Activated CD4-positive, alpha-beta memory T cell treated with anti-CD3 and anti-CD28 coated beads, Interleukin-2, amount 10 ng/mL, durations not matched to agents 7 days and 5 days (primary cell): ENCODE measurements at regions of chr13 and their contacts with region 1.

Region 1: DNA sequence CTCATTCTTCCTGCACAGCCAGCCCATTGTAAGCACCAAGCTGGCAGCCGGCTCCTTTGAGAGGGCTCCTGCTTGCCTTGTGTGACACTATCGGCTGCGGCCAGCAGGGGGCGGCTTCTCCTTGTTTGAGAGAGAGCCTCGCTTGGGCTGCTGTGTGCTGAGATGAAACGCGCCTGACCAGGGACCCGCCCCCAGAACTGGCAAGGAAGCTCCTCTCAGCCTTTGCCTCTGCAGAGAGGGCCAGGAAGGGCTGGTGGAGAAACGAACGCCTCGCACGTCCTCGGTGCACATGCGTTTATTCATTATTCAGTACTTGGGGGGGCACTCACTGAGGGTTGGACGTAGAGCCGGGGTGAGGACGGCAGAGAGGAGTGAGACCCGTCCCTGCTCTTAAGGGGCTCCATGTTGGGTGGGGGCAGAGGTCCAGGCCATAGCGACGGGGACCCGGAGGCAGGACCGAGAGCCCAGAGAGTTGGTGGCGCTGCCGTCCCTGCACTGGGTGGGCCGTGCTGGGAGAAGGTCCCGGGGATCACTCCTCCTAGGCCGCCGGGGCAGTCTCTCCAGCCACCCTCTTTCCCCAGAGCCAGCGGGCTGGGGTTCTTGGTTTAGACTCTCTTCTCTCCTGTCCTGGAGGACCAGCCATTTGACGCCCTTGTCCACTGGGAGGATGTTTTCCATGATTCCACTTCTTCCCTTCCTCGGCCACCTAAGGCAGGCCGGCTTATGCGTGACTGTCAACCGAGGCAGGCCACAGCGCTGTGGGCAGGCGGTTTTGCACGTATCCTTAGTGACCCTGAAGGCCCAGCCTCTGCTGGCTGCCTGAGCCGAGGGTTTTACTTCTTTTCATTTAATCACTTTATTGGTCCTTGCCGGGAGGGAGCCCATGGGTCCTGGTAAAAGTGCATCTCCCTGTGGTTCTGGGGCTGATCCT is 174.5 kb downstream of the KATNAL1 start:
- DNase-seq: peak; percentile 98
- H3K4me3 Mint-ChIP-seq: no peak overlapping the region
- H3K27ac Mint-ChIP-seq: peak overlapping the region; percentile 21
- H3K4me1 Mint-ChIP-seq: peaks cover 11% of the 10 kb centered on the region
- H3K27me3 Mint-ChIP-seq: no peaks in the 10 kb centered on the region

Region 2: GRCh38 chr13:29522044-29522685 is 610.7 kb before region 1 on chr13:
- CTCF ChIA-PET with region 1: no interaction called
- POLR2A ChIA-PET with region 1: no interaction called
- DNase-seq: no peak
- H3K4me3 Mint-ChIP-seq: no peak overlapping the region
- H3K27ac Mint-ChIP-seq: no peak overlapping the region
- H3K4me1 Mint-ChIP-seq: no peaks in the 10 kb centered on the region
- H3K27me3 Mint-ChIP-seq: no peaks in the 10 kb centered on the region

Region 3: DNA sequence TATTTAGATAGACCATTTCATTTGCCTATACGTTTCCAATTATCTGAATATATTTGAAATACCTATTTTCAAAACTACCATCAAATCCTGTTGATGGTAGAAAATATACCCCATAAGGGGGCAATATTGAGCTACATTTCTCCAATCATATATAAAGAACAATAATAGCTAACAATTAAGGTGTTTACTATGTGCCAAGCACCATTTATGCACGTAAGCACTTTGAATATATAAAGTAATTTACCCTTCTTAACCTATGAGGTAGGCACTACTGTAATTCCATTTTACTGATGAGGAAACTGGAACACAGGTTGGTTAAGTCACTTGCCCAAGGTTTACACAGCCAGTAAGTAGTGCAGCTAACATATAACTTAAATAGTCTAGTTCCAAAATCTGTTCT is 361.6 kb before region 1 on chr13:
- CTCF ChIA-PET with region 1: interaction called, 21 read pairs
- POLR2A ChIA-PET with region 1: no interaction called
- DNase-seq: no peak
- H3K4me3 Mint-ChIP-seq: no peak overlapping the region
- H3K27ac Mint-ChIP-seq: no peak overlapping the region
- H3K4me1 Mint-ChIP-seq: no peaks in the 10 kb centered on the region
- H3K27me3 Mint-ChIP-seq: no peaks in the 10 kb centered on the region

Region 4: DNA sequence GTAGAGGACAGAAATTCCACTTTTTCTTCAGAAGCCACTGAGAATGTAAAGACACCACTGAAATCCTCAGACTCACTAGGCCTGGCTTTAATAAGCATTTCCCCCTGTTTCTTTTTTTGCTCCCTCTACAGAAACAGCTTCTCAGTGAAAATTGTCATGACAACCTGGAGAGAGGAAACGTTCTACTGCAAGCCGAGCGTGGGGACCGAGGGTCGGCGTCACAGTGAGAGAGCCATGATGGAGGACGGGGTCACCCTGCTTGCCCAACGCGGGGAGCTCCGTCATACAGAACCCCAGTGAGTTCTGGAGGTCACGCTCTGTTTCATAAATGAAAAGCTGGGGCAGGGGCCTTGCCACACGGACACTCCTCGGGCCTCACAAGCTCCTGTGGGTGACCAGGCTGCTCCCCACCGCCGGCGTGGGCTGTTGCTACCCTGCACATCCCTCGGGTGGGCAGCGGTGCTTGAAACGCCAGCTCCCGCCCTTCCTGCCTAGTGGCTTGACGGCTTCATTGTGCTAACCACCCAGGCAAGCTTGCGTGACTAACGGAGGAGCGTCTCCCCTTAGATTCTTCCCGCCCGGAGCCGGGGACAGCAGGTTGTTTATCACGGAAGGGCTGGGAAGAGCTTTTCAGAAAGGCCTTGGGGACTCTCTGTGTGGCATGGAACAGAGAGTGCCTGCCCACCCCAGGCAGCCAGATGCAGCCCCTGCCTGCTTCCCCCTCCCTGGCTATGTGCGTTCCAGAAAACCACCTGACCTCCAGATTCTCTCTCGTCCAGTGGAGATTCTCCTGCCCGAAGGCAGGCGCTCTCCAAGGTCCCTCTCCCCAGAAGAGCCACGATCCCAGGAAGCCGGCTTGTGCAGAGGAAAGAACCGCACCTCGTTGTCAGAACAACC is 20.9 kb after region 1 on chr13:
- CTCF ChIA-PET with region 1: interaction called, 160 read pairs
- POLR2A ChIA-PET with region 1: interaction called, 42 read pairs
- DNase-seq: no peak
- H3K4me3 Mint-ChIP-seq: no peak overlapping the region
- H3K27ac Mint-ChIP-seq: no peak overlapping the region
- H3K4me1 Mint-ChIP-seq: peaks cover 80% of the 10 kb centered on the region
- H3K27me3 Mint-ChIP-seq: no peaks in the 10 kb centered on the region

Region 5: DNA sequence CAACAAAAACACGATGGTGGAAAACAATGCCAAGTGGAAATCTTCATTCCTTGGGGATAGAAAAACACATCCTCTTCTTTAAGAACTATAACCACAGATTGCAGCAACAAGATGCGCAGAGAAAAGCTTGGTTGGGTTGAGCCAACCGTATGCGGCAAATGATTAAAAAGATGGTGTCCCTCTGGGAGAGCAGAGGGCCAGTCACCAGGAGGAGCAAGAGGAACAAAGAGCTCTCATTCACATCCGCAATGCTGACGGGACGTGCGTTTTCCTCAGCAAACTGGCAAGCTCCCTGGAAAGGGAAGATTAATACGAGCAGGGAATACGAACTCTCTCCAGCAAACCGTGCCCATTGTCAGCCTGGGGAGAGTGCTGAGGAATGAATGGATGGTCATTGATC is 32.9 kb after region 1 on chr13:
- CTCF ChIA-PET with region 1: interaction called, 160 read pairs
- POLR2A ChIA-PET with region 1: interaction called, 5 read pairs
- DNase-seq: no peak
- H3K4me3 Mint-ChIP-seq: no peak overlapping the region
- H3K27ac Mint-ChIP-seq: no peak overlapping the region
- H3K4me1 Mint-ChIP-seq: peaks cover 9% of the 10 kb centered on the region
- H3K27me3 Mint-ChIP-seq: peaks cover 7% of the 10 kb centered on the region

Region 6: DNA sequence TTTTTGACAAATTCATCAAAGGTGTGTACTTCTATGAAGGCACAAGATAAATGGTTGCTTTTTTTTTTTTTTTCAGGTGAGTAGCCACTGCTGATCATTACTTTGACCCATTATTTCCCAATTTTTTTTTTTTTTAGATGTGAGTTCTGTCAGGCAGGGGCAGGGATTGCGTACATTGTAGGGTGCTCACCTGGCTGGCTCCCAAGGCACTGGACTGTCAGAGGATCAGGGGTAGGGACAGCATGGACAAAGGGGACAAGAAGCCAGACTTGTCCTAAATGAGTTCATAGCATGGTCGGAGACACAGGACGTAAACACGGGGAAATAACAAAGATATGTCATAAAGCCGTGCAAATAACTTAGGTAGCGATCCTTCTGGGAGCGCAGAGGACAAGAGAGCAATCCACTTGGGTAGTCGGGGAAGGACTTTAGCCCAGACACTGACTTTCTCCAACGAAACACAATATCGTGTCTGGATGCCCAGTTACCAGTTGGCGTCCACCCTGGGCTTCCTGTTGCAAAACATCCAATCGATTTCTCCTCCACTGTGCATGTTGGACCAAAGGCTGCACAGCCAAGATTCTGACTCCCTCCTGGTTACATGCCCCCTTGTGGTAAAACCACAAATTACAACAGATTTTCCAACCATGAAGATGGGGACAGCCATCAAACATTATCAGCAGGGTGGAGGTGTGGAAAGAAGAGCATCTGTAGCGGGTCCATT is 201.9 kb after region 1 on chr13:
- CTCF ChIA-PET with region 1: interaction called, 18 read pairs
- POLR2A ChIA-PET with region 1: no interaction called
- DNase-seq: peak; percentile 21
- H3K4me3 Mint-ChIP-seq: no peak overlapping the region
- H3K27ac Mint-ChIP-seq: no peak overlapping the region
- H3K4me1 Mint-ChIP-seq: peaks cover 17% of the 10 kb centered on the region
- H3K27me3 Mint-ChIP-seq: no peaks in the 10 kb centered on the region

Region 7: DNA sequence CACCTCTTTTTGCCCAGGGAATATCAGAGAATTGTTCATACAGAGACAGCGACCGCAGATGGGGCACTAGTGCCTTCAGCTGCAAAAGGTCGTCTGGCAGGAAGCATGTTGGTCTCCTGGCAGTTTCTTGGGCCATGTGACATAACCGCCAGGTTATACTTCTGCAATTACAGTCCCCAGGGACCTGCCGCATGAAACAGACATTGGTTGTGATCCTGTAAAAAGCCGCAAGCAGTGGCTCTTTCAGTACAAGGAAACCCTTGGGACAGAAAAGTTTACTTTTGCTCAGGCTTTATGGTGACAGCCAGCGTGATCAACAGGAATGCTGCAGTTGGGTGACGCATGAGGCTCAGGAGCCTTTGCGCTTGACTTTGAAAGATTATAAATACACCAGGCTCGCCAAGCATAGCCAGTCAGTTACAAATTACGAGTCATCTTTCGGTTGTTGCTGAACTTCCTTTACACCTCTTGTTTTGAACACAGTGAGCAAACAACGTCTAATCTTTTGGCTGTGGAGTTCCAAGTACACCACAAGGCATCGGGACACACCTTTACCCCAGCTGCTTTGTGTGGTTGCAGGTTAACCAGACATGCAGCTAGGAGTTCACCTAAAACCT is 238.9 kb after region 1 on chr13:
- CTCF ChIA-PET with region 1: interaction called, 10 read pairs
- POLR2A ChIA-PET with region 1: interaction called, 3 read pairs
- DNase-seq: peak; percentile 73
- H3K4me3 Mint-ChIP-seq: peak overlapping the region; percentile 78
- H3K27ac Mint-ChIP-seq: peak overlapping the region; percentile 96
- H3K4me1 Mint-ChIP-seq: peaks cover 79% of the 10 kb centered on the region
- H3K27me3 Mint-ChIP-seq: no peaks in the 10 kb centered on the region

Region 8: GRCh38 chr13:30654430-30654829 is 521.5 kb after region 1 on chr13:
- CTCF ChIA-PET with region 1: no interaction called
- POLR2A ChIA-PET with region 1: no interaction called
- DNase-seq: peak; percentile 60
- H3K4me3 Mint-ChIP-seq: peak overlapping the region; percentile 47
- H3K27ac Mint-ChIP-seq: peak overlapping the region; percentile 84
- H3K4me1 Mint-ChIP-seq: peaks cover 56% of the 10 kb centered on the region
- H3K27me3 Mint-ChIP-seq: no peaks in the 10 kb centered on the region